Right ventricle myocardium superior (tissue), 1 donor: ENCODE measurements at regions of chr11 and their contacts with region 1.

Region 1: DNA sequence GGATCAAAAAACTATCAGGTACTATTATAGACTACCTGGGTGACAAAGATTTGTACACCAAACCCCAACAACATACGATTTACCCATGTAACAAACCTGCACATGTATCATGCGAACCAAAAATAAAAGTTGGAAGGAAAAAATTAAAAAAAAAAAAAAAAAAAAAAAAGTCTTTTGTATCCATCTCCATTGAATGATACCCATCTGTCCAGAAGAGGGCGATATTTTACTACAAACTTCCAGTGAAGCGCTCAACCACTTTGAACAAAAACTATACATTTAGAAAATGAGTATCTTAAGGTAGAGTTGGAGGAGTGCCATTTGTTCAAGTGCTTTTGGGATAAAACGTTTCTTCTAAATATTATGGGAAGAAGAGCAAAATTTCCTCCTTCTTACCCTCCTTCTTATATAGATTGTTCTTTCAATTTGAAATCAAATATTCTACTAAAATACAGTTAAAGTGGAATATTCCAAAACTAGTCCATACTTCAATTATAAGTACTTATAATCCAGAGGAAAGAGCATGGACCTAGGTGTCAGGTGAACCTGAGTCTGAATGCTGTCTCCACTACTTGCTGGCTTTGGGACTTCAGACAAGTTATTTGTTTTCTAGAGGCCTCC is 23.3 kb downstream of the ARL14EP start:
- DNase-seq: no peak
- ATAC-seq: peak; percentile 69

Region 2: DNA sequence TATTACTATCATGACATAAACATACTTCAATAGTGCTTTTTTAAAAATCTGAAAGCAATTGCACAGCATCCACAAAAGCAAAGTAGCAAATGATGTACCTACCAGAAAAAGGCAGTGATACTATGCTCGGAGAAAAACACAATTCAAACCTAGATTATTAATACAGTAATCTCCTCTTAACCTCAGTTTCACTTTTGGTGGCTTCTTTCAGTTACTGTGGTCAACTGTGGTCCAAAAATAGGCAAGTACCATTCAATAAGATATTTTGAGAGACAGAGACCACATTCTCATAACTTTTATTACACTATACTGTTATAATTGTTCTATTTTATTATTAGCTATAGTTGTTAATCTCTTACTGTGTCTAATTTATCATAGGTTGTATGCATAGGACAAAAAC is 350.2 kb before region 1 on chr11:
- intact Hi-C with region 1: no loop called
- DNase-seq: no peak
- ATAC-seq: no peak

Region 3: DNA sequence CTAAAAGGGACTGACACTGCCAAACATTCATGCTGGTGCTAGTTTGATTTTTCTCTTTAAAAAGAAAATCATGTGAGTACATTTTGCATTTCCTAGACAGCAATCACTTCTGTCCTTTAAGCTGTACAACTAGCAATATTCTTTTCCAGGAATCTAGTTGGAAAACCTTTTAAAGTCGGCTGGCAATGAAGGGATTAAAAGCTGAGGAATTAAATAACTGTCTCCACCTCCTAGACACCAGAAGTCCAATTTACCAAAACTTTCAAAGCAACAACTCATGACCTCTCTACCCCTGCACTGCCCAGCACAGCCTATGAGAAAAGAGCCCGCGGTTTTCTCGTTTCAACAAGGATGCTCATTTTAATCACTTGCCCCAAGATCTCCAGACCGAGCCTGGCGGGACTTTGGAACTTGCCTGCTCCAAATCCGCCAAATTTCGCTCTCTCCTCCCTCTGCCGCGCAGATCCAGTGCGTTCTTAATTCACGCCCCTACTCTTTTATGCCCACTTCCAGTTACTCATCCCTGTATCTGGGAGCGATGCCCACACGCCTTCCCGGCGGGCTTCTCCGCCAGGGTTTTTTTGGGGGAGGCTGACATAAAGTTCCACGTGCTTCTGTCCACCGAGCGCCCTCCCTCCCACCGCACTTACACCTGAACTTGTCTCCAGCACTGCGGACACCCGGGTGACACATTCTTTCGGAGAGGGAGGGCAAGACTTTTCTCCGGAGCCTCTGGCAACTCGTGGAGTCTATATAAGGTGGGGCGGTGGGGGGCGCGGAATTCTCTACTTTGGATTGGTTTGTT is 237.5 kb after region 1 on chr11:
- intact Hi-C with region 1: loop called (anchors 5 kb)
- DNase-seq: peak; percentile 34
- ATAC-seq: no peak

Region 4: DNA sequence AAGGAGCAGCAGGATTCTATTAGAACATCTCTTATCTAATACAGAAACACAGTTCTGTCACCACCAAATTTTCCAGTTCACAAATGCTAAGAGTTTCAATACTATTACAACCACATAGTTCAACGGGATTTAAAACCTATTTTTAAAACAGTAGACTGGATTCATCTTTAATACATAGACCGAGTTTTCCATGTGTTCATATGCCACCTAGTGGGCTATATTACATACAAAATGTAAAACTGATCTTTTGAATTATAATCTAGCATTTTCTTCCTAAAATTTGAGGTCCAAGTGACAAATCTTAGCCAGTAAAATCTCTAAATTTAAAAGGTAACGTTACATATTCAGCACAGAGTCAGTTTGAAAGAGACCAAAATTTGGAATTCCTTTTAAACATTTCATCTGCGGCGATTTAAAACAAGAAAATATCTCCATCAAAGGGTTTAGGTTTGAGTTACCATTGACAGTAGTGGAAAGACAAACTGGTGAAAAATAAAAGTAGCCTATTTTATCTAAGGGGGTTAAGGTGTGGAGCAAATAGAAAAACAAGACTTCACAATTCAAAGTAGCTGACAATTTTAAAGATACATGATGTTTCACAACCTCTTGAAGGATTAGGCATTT is 509.3 kb after region 1 on chr11:
- intact Hi-C with region 1: loop called (anchors 2 kb)
- DNase-seq: no peak
- ATAC-seq: peak; percentile 45